Head of caudate nucleus (tissue), 42 donors: ENCODE measurements at regions of chr15 and their contacts with region 1.

Region 1: GRCh38 chr15:29747837-29748417 is 74.3 kb downstream of the TJP1 start:
- DNase-seq: no peak

Region 2: DNA sequence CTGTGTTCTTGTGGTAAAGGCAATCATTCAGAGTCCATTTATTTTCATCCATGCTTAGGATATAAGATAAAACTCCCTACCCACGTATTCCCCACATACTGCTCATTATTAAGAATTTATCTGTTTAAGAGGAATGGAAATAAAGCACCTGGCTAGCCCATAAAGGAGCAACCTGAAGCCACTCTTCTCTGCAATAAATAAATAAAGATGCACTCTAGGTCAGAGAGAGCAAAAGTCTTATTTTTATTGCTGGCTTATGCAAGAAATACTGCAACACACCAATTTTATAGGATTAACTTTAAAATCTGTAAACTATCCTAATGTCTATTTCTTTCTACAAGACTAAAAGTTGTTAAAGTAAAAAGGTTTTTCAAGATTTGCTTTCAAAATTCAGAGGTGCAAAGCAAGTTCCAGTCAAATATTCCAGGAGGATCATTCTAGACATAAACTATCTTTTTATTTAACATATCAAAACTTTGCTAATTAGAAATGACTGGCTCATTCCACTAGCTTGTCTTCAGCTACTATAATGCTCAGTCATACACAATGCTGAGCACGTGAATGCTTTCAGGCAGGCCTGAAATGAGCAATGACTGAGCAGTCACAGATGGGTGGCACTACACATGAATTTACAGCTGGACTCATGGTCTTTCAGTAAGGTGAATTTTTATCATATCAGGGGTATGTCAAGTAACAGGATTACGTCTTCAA is 67.2 kb after region 1 on chr15:
- intact Hi-C with region 1: loop called (anchors 10 kb)
- DNase-seq: peak in 2 of 42 donors; percentile 21 to 39